IMR-90 (cell line): ENCODE measurements at regions of chr9 and their contacts with region 1.

Region 1: GRCh38 chr9:18936094-18936871 is 96.7 kb downstream of the SAXO1 start:
- DNase-seq: no peak
- ATAC-seq: no peak
- H3K4me3 ChIP-seq: no peak overlapping the region
- H3K27ac ChIP-seq: no peak overlapping the region
- H3K4me1 ChIP-seq: no peaks in the 10 kb centered on the region
- H3K27me3 ChIP-seq: peaks cover 15% of the 10 kb centered on the region
- CTCF ChIP-seq: no peak
- POLR2A ChIP-seq: no peak
- RAD21 ChIP-seq: no peak

Region 2: DNA sequence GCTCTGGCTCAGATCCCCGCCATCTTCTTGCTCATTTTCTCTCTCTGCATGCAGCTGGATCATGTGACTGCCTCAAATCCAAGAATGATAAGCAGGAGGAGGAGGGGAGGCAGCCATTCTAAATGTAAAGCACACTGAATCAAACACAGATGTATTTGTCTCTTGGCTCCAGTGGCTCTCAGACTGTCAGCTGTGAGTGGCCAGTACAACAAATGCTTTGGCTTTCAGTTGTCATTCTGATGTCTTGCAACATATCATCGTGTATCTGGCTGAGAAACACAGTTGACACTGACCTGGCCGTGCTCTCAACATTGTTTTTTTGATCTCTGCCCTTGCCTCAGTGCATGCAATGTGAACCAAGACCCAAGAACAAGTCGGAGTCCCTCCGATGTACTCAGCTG is 229.2 kb before region 1 on chr9:
- CTCF ChIA-PET with region 1: no interaction called
- POLR2A ChIA-PET with region 1: no interaction called
- dilution Hi-C with region 1: no loop called
- in situ Hi-C with region 1: no loop called
- intact Hi-C with region 1: no loop called
- DNase-seq: peak; percentile 6
- ATAC-seq: 0 out of 2 replicates have a peak, but pooled peaks have one; percentile 21
- H3K4me3 ChIP-seq: no peak overlapping the region
- H3K27ac ChIP-seq: peak overlapping the region; percentile 18; the same call in 1 of the 2 replicates
- H3K4me1 ChIP-seq: peaks cover 8% of the 10 kb centered on the region; the same call in 1 of the 2 replicates
- H3K27me3 ChIP-seq: no peaks in the 10 kb centered on the region
- CTCF ChIP-seq: no peak
- POLR2A ChIP-seq: no peak
- RAD21 ChIP-seq: no peak

Region 3: GRCh38 chr9:18893491-18893890 is 42.8 kb before region 1 on chr9:
- CTCF ChIA-PET with region 1: no interaction called
- POLR2A ChIA-PET with region 1: interaction called, 15 read pairs
- dilution Hi-C with region 1: no loop called
- in situ Hi-C with region 1: no loop called
- intact Hi-C with region 1: no loop called
- DNase-seq: peak; percentile 6
- ATAC-seq: no peak
- H3K4me3 ChIP-seq: no peak overlapping the region
- H3K27ac ChIP-seq: no peak overlapping the region
- H3K4me1 ChIP-seq: no peaks in the 10 kb centered on the region
- H3K27me3 ChIP-seq: no peaks in the 10 kb centered on the region
- CTCF ChIP-seq: no peak
- POLR2A ChIP-seq: no peak
- RAD21 ChIP-seq: no peak